Right ventricle myocardium inferior (tissue), 1 donor: ENCODE measurements at regions of chr11 and their contacts with region 1.

Region 1: GRCh38 chr11:16785520-16786128 is 47.2 kb downstream of the C11orf58 start:
- DNase-seq: no peak
- ATAC-seq: peak; percentile 82

Region 2: DNA sequence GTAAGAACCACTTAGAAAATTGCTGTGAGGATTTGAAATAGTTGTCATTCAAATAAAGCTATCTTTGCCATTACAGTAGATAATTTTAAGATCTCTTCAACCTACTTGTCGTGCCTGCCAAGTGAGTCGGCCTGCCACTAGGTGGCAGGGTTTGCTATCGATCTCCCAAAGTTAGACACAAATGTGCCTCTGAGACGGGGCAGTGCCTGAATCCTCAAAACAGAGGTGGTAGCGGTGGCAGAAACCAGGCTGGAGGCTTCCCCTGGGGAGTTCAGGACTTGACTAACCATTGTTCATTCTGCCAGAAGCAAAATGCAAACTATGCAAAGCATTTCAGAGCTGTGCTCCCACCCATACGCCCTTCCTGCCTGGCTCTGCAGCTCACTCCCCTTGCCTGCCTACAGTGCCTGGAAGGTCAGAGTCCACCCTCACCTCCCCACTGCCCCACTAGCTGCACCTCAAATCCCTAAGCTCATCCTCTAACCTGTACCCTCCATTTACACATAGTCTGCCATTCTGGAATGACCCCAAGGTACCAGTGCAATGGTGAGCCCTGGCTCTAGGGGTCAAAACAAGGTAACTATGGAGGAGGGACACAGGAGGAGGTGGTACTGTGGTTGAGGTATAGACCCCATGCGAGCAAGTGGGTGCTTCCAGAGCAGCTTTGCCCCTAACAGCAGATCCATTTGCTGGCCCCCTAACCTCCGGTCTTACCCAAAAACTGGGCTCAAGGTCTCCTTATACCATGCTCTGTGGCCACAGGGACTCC is 34.9 kb after region 1 on chr11:
- intact Hi-C with region 1: loop called (anchors 5 kb)
- DNase-seq: peak; percentile 87
- ATAC-seq: peak; percentile 61

Region 3: DNA sequence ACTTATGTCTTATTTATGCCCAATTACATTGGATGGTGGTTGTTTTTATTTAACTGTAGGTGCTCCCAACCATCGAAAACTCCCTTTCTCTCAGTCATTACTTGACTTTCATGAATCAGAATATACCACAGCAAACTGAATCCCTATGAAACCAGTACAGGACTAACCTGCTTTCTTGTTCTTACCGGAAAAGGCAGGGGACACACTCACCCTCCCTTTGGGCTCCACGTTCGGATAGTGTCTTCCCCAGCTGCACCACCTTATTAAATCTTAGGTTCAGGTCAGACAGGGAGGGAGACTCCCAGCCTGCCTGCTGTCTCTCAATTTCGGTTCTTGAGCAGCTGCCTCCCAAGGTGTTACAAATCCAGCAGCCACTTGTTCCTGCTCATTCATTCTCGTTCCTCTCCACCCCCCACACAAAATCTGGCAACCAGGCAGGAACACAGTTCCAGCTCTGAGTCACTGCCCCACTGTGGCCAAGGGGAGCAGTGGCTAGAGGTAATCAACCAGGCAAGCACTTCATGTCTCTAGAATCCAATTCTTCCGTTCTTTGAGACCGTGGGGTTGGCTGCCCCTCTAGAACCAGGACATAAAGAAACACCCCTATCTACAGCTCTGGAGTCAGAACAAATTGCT is 95.6 kb after region 1 on chr11:
- intact Hi-C with region 1: loop called (anchors 2 kb)
- DNase-seq: peak; percentile 65
- ATAC-seq: peak; percentile 84

Region 4: DNA sequence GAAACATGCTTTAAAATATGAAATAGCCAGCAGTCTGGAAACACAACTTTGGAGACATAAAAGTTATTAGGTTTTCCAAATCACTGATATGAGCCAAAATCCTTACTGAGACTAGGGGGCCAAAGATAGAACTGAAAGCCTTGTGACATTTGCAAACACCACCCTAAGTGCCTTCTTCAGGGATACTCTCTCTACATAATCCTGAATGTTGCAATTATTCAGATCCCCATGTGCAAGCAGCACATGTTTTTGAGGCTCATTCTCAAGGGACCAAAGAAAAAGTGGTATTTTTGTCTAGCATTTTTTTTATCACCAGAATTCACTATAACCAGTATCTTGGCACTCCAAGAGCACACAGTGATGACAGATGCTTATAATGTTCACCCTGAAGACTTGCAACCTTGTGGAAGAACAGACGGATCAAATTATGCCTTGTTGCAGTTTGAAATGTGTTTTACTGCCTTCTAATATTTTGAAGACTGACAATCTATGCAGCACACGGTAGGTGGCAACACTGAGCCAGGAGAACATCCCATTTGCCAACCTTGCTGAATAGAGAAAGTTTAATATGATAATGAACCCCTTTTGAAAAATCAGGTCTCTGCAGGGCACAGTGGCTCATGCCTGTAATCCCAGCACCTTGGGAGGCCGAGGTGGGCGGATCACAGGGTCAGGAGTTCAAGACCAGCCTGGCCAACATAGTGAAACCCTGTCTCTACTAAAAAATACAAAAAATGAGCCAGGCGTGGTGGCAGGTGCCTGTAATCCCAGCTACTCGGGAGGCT is 150.1 kb after region 1 on chr11:
- intact Hi-C with region 1: loop called (anchors 5 kb)
- DNase-seq: no peak
- ATAC-seq: peak; percentile 54

Region 5: DNA sequence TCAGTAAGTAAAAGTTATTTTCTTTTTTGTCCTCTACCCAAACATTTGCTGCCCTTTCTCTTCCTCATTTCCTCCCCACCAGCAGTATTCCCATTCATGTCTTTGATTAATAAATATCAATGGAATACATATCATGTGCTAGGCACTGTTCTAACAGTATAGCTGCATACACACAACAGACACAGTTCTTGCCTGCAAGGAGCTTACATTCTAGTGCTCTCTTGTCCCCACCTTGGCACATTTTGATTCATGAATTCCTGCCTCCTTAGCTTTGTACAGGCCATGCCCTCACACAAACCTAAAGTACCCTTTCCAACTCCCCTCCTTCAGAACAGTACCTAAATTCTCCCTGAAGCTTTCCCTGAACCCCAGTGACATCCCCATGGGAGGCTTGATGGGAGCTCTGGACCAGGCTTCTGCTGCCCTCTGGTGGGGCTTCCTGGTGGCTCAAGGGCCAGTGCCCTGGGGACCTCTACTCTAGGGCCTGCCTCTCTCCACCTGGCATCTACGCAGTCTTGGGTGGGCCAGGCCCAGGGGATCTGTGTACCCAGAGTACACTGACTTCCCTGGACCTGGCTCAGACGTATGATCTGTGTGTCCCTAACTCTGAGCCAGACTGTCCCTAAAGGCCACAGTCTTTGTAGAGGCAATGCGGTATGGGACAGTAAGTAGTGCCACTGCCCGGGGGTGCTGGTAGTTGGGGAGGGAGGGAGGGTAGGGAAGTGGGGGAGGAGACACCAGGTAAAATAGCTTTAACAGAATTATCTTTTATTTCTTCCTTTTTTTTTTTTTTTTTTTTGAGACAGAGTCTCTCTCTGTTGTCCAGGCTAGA is 277.8 kb after region 1 on chr11:
- intact Hi-C with region 1: loop called (anchors 2 kb)
- DNase-seq: peak; percentile 72
- ATAC-seq: peak; percentile 88